ENCODE measurements at regions of chr18 and their contacts with region 1.

Region 1: GRCh38 chr18:33495278-33495677 is 54.8 kb upstream of the CCDC178 start:
- DNase-seq: peak; percentile 21 to 34 (median 27)
- ATAC-seq: peak; percentile 85
- H3K4me3 ChIP-seq: no peak overlapping the region
- H3K27ac ChIP-seq: no peak overlapping the region
- H3K4me1 ChIP-seq: no peaks in the 10 kb centered on the region
- H3K27me3 ChIP-seq: no peaks in the 10 kb centered on the region
- CTCF ChIP-seq: peak; percentile 41 to 57 (median 47); a peak in 4 of 6 replicates
- EP300 ChIP-seq: no peak
- POLR2A ChIP-seq: no peak
- RAD21 ChIP-seq: peak; percentile 22 to 46; a peak in 2 of 4 replicates

Region 2: GRCh38 chr18:33231474-33232317 is 263.6 kb before region 1 on chr18:
- CTCF ChIA-PET with region 1: no interaction called
- POLR2A ChIA-PET with region 1: no interaction called
- in situ Hi-C with region 1: no loop called
- intact Hi-C with region 1: loop called (anchors 2 kb)
- DNase-seq: peak; percentile 43 to 78 (median 50)
- ATAC-seq: peak; percentile 81
- H3K4me3 ChIP-seq: no peak overlapping the region
- H3K27ac ChIP-seq: no peak overlapping the region
- H3K4me1 ChIP-seq: no peaks in the 10 kb centered on the region
- H3K27me3 ChIP-seq: no peaks in the 10 kb centered on the region
- CTCF ChIP-seq: peak; percentile 62 to 77 (median 72)
- EP300 ChIP-seq: no peak
- POLR2A ChIP-seq: no peak
- RAD21 ChIP-seq: peak; percentile 41 to 78

Region 3: GRCh38 chr18:33440060-33441043 is 54.9 kb before region 1 on chr18 and contains the start of gene CCDC178:
- CTCF ChIA-PET with region 1: no interaction called
- POLR2A ChIA-PET with region 1: no interaction called
- in situ Hi-C with region 1: no loop called
- intact Hi-C with region 1: loop called (anchors 1 kb)
- DNase-seq: peak; percentile 18 to 56 (median 26)
- ATAC-seq: peak; percentile 91
- H3K4me3 ChIP-seq: peak within 1 kb of the TSS; percentile 31
- H3K27ac ChIP-seq: no peak within 1 kb of the TSS
- H3K4me1 ChIP-seq: peaks cover 0 to 4% of the 10 kb centered on the region in 2 experiments; a peak in 1 of 5 replicates
- H3K27me3 ChIP-seq: no peaks in the 10 kb centered on the region
- CTCF ChIP-seq: peak; percentile 26 to 59 (median 45); a peak in 5 of 6 replicates
- EP300 ChIP-seq: no peak
- POLR2A ChIP-seq: no peak
- RAD21 ChIP-seq: no peak
- polyA plus RNA-seq, gene CCDC178: not detected

Measured in K562 (cell line).